H1 (cell line): ENCODE measurements at regions of chr5 and their contacts with region 1.

Region 1: GRCh38 chr5:54517174-54518092 is at the start of gene SNX18:
- DNase-seq: peak; percentile 71 to 91
- H3K4me3 ChIP-seq: peak within 1 kb of the TSS; percentile 44 to 75 (median 58)
- H3K27ac ChIP-seq: 0 out of 2 replicates have a peak within 1 kb of the TSS, but pooled peaks have one; percentile 28
- H3K4me1 ChIP-seq: peaks cover 0 to 13% (median 9%) of the 10 kb centered on the region in 4 experiments; a peak in 5 of 7 replicates
- H3K27me3 ChIP-seq: peaks cover 0 to 16% (median 12%) of the 10 kb centered on the region in 4 experiments; a peak in 5 of 7 replicates
- CTCF ChIP-seq: peak; percentile 81 to 97 (median 86)
- EP300 ChIP-seq: peak in 1 of 2 experiments; percentile 77; a peak in 1 of 3 replicates
- POLR2A ChIP-seq: peak in 1 of 2 experiments; percentile 56; a peak in 1 of 3 replicates
- RAD21 ChIP-seq: peak; percentile 91 to 97
- total RNA-seq, gene SNX18: 17.3 and 17.7 TPM in 2 replicates

Region 2: DNA sequence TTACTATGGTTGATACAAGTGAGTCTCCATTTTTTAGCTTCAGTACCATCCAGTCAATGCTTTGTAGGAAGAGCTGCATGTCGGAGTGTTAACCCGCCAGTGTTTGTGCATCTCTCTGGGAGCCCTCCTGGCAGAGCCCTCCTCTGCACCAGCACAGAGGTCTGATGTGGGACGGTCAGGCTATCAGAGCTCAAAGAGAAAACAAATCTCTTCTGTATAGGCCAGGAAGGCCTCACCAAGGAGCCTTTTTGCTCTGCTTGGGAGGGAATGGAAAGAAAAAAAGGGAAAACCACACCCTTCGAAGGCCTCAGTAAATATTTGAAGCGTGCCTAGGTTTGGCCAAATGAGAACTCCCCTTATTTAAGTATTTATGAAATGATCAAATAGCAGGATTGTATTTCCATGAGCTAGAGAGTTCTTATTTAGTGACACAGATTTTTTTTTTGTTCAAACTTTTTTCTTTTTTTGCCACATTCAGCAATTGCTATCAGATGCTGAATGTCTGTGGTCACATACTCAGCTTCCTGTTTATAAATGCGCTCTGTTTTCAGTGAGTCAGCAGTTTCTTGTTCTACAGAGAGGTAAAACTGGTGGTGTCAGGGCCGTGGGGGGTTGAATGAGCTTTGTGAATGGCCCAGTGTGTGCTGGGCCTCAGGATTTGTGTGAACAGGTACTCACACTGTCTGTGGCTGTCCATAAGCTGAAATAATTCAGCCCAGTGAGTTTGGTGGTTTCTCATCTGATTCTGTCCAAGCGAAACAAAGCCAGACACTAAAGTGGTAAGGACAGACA is 226.8 kb after region 1 on chr5:
- CTCF ChIA-PET with region 1: interaction called, 21 read pairs
- POLR2A ChIA-PET with region 1: no interaction called
- DNase-seq: peak in 1 of 2 experiments; percentile 44
- H3K4me3 ChIP-seq: no peak overlapping the region
- H3K27ac ChIP-seq: no peak overlapping the region
- H3K4me1 ChIP-seq: peaks cover 0 to 7% (median 4%) of the 10 kb centered on the region in 4 experiments; a peak in 4 of 7 replicates
- H3K27me3 ChIP-seq: no peaks in the 10 kb centered on the region
- CTCF ChIP-seq: no peak
- EP300 ChIP-seq: no peak
- POLR2A ChIP-seq: no peak
- RAD21 ChIP-seq: no peak

Region 3: GRCh38 chr5:54766748-54767147 is 249.3 kb after region 1 on chr5:
- CTCF ChIA-PET with region 1: interaction called, 19 read pairs
- POLR2A ChIA-PET with region 1: no interaction called
- DNase-seq: no peak
- H3K4me3 ChIP-seq: no peak overlapping the region
- H3K27ac ChIP-seq: no peak overlapping the region
- H3K4me1 ChIP-seq: no peaks in the 10 kb centered on the region
- H3K27me3 ChIP-seq: peaks cover 0 to 1% (median 0%) of the 10 kb centered on the region in 4 experiments; a peak in 1 of 7 replicates
- CTCF ChIP-seq: peak; percentile 14 to 49 (median 42); a peak in 2 of 4 replicates
- EP300 ChIP-seq: no peak
- POLR2A ChIP-seq: no peak
- RAD21 ChIP-seq: peak; percentile 21 to 29; a peak in 3 of 4 replicates

Region 4: GRCh38 chr5:54844905-54845566 is 327.6 kb after region 1 on chr5:
- CTCF ChIA-PET with region 1: interaction called, 33 read pairs
- POLR2A ChIA-PET with region 1: interaction called, 9 read pairs
- DNase-seq: no peak
- H3K4me3 ChIP-seq: no peak overlapping the region
- H3K27ac ChIP-seq: no peak overlapping the region
- H3K4me1 ChIP-seq: no peaks in the 10 kb centered on the region
- H3K27me3 ChIP-seq: no peaks in the 10 kb centered on the region
- CTCF ChIP-seq: no peak; a peak in 1 of 4 replicates
- EP300 ChIP-seq: no peak
- POLR2A ChIP-seq: no peak
- RAD21 ChIP-seq: peak in 1 of 2 experiments; percentile 42; a peak in 3 of 4 replicates

Region 5: GRCh38 chr5:54867310-54867944 is 350.0 kb after region 1 on chr5:
- CTCF ChIA-PET with region 1: interaction called, 58 read pairs
- POLR2A ChIA-PET with region 1: no interaction called
- DNase-seq: no peak
- H3K4me3 ChIP-seq: no peak overlapping the region
- H3K27ac ChIP-seq: no peak overlapping the region
- H3K4me1 ChIP-seq: no peaks in the 10 kb centered on the region
- H3K27me3 ChIP-seq: peaks cover 0 to 1% (median 0%) of the 10 kb centered on the region in 4 experiments; a peak in 1 of 7 replicates
- CTCF ChIP-seq: peak in 1 of 3 experiments; percentile 11; a peak in 1 of 4 replicates
- EP300 ChIP-seq: no peak
- POLR2A ChIP-seq: no peak
- RAD21 ChIP-seq: peak; percentile 47 to 51